HEK293T (cell line): ENCODE measurements at regions of chr4 and their contacts with region 1.

Region 1: GRCh38 chr4:13640149-13640940 is 12.8 kb upstream of the BOD1L1 start:
- DNase-seq: peak; percentile 23

Region 2: DNA sequence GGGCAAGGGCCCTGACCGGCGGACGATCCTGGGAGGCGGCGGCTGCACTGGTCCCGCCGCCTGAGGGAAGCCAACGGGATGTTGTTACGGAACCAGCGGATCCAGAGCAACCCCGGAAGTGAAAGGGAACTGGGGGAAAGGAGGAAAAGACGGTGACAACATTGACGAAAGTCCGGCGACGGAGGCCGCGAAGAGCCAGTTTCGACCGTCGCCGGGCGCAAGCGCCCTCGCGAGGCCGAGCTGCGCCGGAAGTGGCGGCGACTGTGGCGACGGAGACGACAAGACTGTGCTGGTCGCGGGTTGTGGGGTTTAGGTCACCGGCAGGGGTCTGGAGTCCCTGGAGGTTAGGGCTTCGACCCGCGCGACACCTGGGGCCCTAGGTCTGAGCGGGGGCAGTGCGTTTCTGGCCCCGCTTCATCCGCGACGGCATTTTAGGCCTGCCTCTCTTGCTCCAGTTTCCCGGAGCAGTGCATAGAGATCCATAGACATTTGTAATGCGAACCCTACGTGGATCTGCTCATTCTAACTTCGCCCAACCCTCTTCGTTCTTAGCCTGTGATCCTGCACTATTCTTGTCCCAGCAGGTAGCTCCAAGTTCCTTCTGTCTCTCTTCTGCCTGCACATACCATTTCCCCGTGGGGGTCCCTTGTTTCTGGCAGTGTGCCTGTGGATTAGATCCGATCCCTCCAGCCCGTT is 12.6 kb before region 1 on chr4 and contains the start of gene BOD1L1:
- CTCF ChIA-PET with region 1: interaction called, 3 read pairs
- POLR2A ChIA-PET with region 1: interaction called, 22 read pairs
- DNase-seq: peak; percentile 87

Region 3: GRCh38 chr4:13654158-13654797 is 13.9 kb after region 1 on chr4:
- CTCF ChIA-PET with region 1: interaction called, 24 read pairs
- POLR2A ChIA-PET with region 1: interaction called, 9 read pairs
- DNase-seq: peak; percentile 79

Region 4: GRCh38 chr4:13705521-13706041 is 65.2 kb after region 1 on chr4:
- CTCF ChIA-PET with region 1: no interaction called
- POLR2A ChIA-PET with region 1: no interaction called
- DNase-seq: no peak